Activated CD4-positive, alpha-beta T cell treated with anti-CD3 and anti-CD28 coated beads, Interleukin-2, amount 10 ng/mL, durations not matched to agents 7 days and 5 days (primary cell): ENCODE measurements at regions of chr7 and their contacts with region 1.

Region 1: DNA sequence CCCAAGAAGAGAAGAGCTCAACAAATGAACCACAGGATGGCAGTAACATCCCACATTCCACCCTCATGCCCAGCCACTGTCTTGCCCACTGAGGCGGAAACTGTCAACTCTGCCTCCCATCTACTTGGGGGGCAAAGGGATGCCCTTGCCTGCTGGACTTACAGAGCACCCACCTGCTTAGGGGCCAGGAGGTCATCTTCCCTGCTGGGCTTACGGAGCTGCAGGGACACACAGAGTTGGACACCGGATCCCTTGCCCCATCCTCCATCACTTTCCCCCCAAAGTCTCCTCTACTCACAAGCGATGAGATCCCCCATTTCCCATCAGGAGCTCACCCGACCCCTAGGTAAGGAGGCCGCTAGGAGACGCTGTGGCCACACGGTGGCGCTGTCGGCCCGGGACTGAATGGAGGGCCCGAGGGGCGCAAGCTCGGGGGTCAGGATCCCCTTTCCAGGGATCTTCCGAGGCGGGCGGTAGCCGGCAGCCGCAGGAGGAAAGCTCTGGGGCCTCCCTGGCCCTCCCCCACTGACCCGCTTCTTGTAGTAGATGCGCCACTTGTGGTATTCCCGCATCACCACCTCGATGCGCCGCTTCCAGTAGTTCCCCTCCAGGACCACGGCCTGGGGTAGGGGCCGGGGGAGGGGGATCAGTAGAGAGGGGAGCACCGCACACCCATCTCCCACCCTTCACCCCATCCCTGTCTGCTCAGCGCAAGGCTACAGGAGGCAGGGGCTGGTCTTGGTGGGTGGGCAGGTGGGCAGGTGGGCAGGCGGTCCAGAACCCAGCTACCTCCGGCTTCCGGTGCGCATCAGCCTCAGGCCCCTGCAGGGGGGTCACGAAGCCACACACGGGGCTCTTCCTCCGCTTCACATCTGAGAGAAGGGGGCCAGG is 17.3 kb downstream of the MLXIPL start:
- DNase-seq: peak; percentile 63
- H3K4me3 Mint-ChIP-seq: no peak overlapping the region
- H3K27ac Mint-ChIP-seq: no peak overlapping the region
- H3K4me1 Mint-ChIP-seq: peaks cover 2% of the 10 kb centered on the region
- H3K27me3 Mint-ChIP-seq: peaks cover 11% of the 10 kb centered on the region

Region 2: DNA sequence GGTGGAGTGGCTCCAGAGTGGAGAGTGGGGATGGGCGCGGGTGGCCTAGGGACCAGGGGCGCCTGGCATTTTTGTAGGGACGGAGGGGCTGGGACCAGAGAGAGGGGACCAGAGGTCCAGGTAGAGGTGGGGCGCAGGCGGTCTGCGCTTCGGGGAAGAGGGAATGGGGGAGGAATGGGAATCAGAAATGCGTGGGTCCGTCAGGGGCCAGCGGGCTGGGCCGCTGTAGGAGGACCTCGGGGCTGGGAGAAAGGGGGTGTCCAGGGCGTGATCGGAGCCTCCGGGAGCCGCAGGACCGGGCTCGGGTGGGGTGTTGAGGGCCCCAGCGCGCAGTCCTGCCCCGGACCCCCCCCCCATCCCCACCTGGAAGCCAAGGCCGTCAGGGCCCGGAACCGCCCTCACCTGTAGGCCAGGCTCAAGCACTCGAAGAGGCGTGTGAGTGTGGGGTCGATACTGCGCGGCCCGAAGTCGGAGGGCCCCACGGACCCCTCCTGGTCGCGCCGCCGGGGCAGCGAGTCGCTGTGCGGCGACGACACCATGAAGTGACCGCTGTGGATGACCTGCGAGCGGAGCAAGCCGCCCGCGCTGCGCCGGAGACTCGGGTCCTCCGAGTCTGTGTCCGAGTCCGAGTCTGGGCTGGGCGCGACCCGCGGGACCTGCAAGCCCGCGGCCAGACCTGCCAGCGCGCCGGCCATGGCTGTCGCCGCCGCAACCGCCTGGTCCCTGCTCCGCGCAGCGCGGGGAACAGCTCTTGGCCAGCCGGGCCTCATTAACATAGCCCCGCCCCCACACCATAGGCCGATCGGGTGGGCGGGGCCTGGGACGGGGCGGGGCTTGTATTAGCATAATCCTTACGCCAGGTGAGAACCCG is 17.0 kb after region 1 on chr7 and contains the start of gene MLXIPL:
- CTCF ChIA-PET with region 1: interaction called, 14 read pairs
- POLR2A ChIA-PET with region 1: no interaction called
- DNase-seq: peak; percentile 62
- H3K4me3 Mint-ChIP-seq: no peak within 1 kb of the TSS
- H3K27ac Mint-ChIP-seq: no peak within 1 kb of the TSS
- H3K4me1 Mint-ChIP-seq: peaks cover 5% of the 10 kb centered on the region
- H3K27me3 Mint-ChIP-seq: peaks cover 57% of the 10 kb centered on the region
- total RNA-seq, gene MLXIPL: not detected

Region 3: DNA sequence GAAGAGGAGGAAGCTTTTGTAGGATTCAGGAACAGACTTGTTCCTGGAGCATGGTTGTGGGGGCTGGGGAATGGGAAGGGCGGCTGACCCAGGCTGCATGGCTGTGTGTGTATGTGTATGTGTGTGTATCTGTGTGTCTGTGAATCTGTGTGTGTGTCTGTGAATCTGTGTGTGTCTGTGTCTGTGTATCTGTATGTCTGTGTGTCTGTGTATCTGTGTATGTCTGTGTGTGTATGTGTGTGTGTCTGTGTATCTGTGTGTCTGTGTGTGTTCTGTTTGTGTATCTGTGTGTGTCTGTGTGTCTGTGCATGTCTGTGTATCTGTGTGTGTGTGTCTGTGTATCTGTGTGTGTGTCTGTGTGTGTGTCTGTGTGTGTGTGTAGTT is 119.0 kb after region 1 on chr7:
- CTCF ChIA-PET with region 1: interaction called, 14 read pairs
- POLR2A ChIA-PET with region 1: no interaction called
- DNase-seq: no peak
- H3K4me3 Mint-ChIP-seq: no peak overlapping the region
- H3K27ac Mint-ChIP-seq: no peak overlapping the region
- H3K4me1 Mint-ChIP-seq: no peaks in the 10 kb centered on the region
- H3K27me3 Mint-ChIP-seq: peaks cover 18% of the 10 kb centered on the region